ENCODE measurements at regions of chr1 and their contacts with region 1.

Region 1: GRCh38 chr1:108691942-108692723 is at the start of gene PRPF38B:
- DNase-seq: peak; percentile 94 to 96
- H3K4me3 ChIP-seq: peak within 1 kb of the TSS; percentile 79 to 93
- H3K27ac ChIP-seq: peak within 1 kb of the TSS; percentile 92 to 98
- H3K4me1 ChIP-seq: peaks cover 0 to 33% (median 16%) of the 10 kb centered on the region in 4 donors
- H3K27me3 ChIP-seq: no peaks in the 10 kb centered on the region
- CTCF ChIP-seq: no peak

Region 2: GRCh38 chr1:108746372-108747205 is 54.5 kb after region 1 on chr1 and contains the start of gene STXBP3:
- intact Hi-C with region 1: loop called (anchors 2 kb)
- DNase-seq: peak; percentile 97 to 99
- H3K4me3 ChIP-seq: peak within 1 kb of the TSS; percentile 68 to 79
- H3K27ac ChIP-seq: peak within 1 kb of the TSS; percentile 89 to 96
- H3K4me1 ChIP-seq: peaks cover 0 to 35% (median 15%) of the 10 kb centered on the region in 4 donors
- H3K27me3 ChIP-seq: no peaks in the 10 kb centered on the region
- CTCF ChIP-seq: peak; percentile 90 to 96

Measured in tibial artery (tissue), 4 donors.